ENCODE measurements at regions of chr2 and their contacts with region 1.

Region 1: DNA sequence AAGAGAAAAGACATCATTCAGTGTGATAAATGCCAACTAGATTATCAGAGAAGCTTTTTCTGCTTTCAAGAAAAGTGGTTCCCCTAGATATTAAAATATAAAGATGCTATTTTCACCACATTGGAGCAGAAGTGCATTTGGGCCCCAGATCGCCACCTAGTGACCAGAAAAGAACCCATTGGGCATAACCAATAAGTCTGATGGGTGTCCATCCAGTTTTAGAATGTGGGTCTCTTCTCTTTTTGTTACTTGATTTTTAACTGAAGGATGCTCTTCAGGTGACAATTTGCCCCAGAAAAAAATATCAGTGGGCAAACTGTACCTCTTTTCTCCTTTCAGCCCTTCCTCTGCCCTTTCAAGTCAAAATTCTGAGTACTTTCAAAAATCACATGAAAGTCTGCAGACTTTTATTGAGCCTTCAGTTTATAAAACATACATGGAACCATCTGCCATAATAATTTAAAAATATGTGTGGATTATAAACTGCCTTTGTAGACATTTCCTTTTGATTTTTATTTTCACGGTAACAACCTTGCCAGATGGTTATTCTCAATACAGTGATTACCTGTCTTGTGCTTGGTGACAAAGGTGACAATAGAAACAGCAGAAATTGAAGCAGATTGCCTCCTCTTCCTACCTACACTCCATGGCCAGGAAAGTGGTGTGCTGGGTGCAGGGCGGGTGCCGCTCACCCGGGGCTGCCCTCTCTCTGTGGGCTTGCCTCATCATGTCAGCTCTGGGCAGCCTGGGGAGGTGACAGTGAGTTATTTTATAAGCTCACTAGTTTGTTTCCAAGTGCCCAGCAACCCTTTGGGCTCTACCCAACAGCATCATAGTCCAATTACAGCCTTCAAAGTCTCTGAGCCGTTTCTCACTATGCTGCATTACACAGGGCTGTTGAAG is 124.5 kb downstream of the DCDC2C start:
- DNase-seq: no peak
- H3K4me3 Mint-ChIP-seq: no peak overlapping the region
- H3K27ac Mint-ChIP-seq: no peak overlapping the region
- H3K4me1 Mint-ChIP-seq: no peaks in the 10 kb centered on the region
- H3K27me3 Mint-ChIP-seq: peaks cover 3% of the 10 kb centered on the region

Region 2: GRCh38 chr2:3644246-3644525 is 183.7 kb before region 1 on chr2:
- CTCF ChIA-PET with region 1: no interaction called
- POLR2A ChIA-PET with region 1: no interaction called
- intact Hi-C with region 1: no loop called
- DNase-seq: no peak
- H3K4me3 Mint-ChIP-seq: no peak overlapping the region
- H3K27ac Mint-ChIP-seq: no peak overlapping the region
- H3K4me1 Mint-ChIP-seq: no peaks in the 10 kb centered on the region
- H3K27me3 Mint-ChIP-seq: peaks cover 1% of the 10 kb centered on the region

Region 3: GRCh38 chr2:3728104-3729054 is 99.5 kb before region 1 on chr2:
- CTCF ChIA-PET with region 1: interaction called, 14 read pairs
- POLR2A ChIA-PET with region 1: no interaction called
- intact Hi-C with region 1: no loop called
- DNase-seq: no peak
- H3K4me3 Mint-ChIP-seq: no peak overlapping the region
- H3K27ac Mint-ChIP-seq: no peak overlapping the region
- H3K4me1 Mint-ChIP-seq: no peaks in the 10 kb centered on the region
- H3K27me3 Mint-ChIP-seq: peaks cover 6% of the 10 kb centered on the region

Region 4: GRCh38 chr2:3738454-3738853 is 89.5 kb before region 1 on chr2:
- CTCF ChIA-PET with region 1: no interaction called
- POLR2A ChIA-PET with region 1: no interaction called
- intact Hi-C with region 1: loop called (anchors 2 kb)
- DNase-seq: peak; percentile 16
- H3K4me3 Mint-ChIP-seq: no peak overlapping the region
- H3K27ac Mint-ChIP-seq: no peak overlapping the region
- H3K4me1 Mint-ChIP-seq: no peaks in the 10 kb centered on the region
- H3K27me3 Mint-ChIP-seq: peaks cover 16% of the 10 kb centered on the region

Measured in activated CD4-positive, alpha-beta memory T cell treated with anti-CD3 and anti-CD28 coated beads for 36 hours (primary cell).